PC-3 (cell line): ENCODE measurements at regions of chr12 and their contacts with region 1.

Region 1: GRCh38 chr12:132481345-132481744 is 8.6 kb upstream of the FBRSL1 start:
- DNase-seq: no peak
- ATAC-seq: no peak
- H3K4me3 ChIP-seq: no peak overlapping the region
- H3K27ac ChIP-seq: no peak overlapping the region
- H3K4me1 ChIP-seq: no peaks in the 10 kb centered on the region
- H3K27me3 ChIP-seq: 0 out of 2 replicates have a peak, but pooled peaks cover 3% of the 10 kb centered on the region
- CTCF ChIP-seq: no peak

Region 2: DNA sequence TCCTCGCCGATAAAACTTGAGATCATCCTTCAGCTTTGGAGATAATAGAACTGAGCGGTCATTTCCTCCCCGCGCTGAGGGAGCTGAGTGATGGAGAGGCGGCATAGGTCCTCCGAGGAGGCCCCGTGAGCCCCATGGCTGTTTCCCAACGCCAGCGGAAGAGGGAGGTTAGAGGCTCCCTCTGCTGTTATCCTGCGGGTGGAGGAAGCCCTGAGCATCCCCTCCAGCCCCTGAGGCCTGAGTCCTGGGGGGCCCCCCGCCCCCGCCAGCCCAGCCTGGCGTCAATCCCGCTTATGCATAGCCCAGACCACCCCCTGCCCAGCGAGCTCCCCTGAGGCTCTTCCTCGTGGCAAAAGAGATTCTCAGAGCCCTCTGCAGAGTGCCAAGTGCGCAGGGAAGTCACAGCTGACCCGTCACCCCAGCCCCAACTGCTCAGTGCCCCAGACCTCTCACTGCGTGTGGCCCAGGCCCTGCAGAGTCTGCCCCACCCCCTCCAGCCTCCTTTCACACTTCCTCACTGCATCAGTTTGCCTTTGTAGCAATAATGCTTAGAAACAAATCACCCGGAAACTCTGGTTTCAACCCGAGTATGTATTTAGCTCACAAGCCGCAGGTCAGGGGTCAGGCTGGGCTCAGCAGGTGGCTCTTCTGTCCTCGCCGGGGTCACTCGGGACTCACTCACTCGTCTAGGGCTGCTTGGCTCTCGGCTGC is 107.3 kb before region 1 on chr12:
- CTCF ChIA-PET with region 1: no interaction called
- POLR2A ChIA-PET with region 1: no interaction called
- intact Hi-C with region 1: no loop called
- DNase-seq: no peak
- ATAC-seq: no peak
- H3K4me3 ChIP-seq: no peak overlapping the region
- H3K27ac ChIP-seq: no peak overlapping the region
- H3K4me1 ChIP-seq: no peaks in the 10 kb centered on the region
- H3K27me3 ChIP-seq: peaks cover 85% of the 10 kb centered on the region
- CTCF ChIP-seq: no peak; the same call in 1 of the 2 replicates

Region 3: GRCh38 chr12:132560614-132561426 is 79.5 kb after region 1 on chr12:
- CTCF ChIA-PET with region 1: no interaction called
- POLR2A ChIA-PET with region 1: no interaction called
- intact Hi-C with region 1: no loop called
- DNase-seq: peak; percentile 80
- ATAC-seq: peak; percentile 53
- H3K4me3 ChIP-seq: peak overlapping the region; percentile 96
- H3K27ac ChIP-seq: peak overlapping the region; percentile 46
- H3K4me1 ChIP-seq: 0 out of 2 replicates have a peak, but pooled peaks cover 4% of the 10 kb centered on the region
- H3K27me3 ChIP-seq: no peaks in the 10 kb centered on the region
- CTCF ChIP-seq: peak; percentile 96

Region 4: DNA sequence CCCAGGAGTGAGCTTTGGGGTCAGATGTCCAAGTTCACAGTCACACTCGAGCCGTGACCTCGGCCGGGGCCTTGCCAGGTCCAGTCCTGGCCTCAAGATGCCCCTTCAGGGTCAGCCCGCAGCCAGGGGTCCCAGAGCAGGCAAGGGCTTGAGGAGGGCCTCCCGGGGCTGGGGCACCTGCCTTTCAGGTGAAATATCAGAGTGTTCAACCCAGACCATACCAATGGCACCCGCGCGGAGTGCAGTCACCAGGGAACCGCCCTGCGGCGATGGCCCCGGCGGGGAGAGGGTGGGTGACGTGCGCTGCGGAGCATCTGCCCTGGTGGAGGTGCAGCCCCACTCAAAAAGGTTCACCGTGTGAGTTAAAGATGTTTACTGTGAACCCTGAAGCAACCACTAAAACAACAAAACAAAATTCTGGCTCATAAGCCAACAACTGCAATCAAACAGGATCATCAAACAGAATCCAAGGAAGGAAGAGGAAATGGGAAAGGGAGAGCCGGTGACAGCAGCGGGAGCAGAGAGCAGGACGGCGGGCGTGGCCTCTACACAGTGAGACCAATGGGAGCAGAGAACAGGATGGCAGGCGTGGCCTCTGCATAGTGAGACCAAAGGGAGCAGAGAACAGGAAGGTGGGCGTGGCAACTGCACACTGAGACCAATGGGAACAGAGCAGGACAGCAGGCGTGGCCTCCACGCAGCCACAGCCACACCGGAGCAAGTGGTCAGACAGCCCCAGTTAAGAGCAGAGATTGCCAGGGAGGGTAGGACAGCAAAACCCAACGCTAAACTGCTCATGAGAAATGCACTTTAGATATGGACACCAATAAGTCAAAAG is 112.4 kb after region 1 on chr12:
- CTCF ChIA-PET with region 1: no interaction called
- POLR2A ChIA-PET with region 1: interaction called, 24 read pairs
- intact Hi-C with region 1: no loop called
- DNase-seq: peak; percentile 99
- ATAC-seq: peak; percentile 99
- H3K4me3 ChIP-seq: peak overlapping the region; percentile 60
- H3K27ac ChIP-seq: no peak overlapping the region
- H3K4me1 ChIP-seq: peaks cover 10% of the 10 kb centered on the region
- H3K27me3 ChIP-seq: no peaks in the 10 kb centered on the region
- CTCF ChIP-seq: no peak